WTC11 (cell line): ENCODE measurements at regions of chr9 and their contacts with region 1.

Region 1: DNA sequence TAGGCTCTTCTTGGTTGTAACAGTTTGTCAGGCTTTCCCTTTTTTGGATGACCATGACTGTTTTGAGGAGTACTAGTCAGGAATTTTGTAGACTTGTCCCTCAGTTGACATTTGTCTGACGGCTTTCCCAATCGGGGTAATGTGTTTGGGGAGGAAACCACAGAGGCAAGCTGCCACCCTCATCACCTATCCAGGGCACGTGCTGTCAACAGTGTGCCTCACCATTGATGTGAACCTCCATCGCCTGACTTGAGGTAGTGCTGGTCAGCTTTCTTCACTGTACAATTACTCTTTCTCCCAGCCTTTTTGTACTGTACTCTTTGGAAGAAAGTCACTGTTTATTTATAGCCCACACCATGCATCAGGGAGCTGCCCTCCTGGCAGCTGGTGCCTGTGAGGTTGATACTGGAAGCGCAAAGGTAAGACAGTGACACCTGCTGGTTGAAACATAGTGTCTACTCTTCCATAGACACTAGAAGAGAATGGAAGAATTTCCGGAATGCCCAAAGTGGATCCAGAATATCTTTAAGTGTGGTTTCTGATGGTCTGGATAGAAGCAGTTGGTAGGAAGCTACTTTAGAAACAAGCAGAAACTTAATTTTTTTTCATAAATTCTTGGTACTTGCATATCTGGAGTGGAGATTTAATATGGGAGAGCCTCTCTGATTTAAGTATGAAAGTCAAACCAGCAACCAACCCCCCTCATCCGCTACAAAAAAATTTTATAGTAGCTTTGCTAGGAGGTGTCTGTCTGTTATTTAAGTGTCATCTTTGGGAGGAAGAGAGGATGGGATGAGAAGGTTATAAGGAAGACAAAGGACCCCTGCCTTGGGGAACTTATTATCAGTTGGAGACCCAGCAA is 69.3 kb downstream of the SNX30 start:
- DNase-seq: peak; percentile 31
- ATAC-seq: peak; percentile 98
- H3K4me3 Mint-ChIP-seq: no peak overlapping the region
- H3K27ac Mint-ChIP-seq: peak overlapping the region; percentile 13
- H3K4me1 Mint-ChIP-seq: no peaks in the 10 kb centered on the region
- H3K27me3 Mint-ChIP-seq: no peaks in the 10 kb centered on the region
- CTCF ChIP-seq: peak; percentile 52

Region 2: DNA sequence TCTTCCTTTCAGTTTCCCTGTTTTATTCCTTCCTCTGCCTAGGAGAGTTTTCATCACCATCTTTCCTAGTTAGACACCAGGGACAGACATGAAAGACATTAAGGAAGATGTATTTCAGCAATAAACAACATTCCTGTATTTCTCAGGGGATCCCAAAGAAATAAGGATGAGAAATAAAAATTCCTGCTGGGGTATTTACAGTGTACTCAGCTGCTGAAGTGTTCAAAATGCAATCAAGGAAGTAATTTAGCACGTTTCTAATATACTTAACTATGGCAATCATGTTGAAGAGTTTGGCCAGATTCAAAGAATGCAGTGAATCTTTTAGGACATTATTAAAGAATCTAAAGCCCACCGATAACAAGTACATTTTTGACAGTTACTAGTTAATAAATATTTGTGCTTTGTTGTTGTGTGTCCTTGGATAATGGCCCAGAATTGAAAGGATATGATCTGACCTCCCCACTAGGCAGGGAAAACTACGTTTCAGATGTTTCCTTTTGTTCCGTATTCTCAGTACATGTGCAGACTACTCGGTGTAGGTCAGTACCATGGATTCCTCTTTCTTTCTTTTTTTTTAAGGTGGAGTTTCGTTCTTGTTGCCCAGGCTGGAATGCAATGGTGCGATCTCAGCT is 148.8 kb before region 1 on chr9:
- CTCF ChIA-PET with region 1: no interaction called
- POLR2A ChIA-PET with region 1: no interaction called
- DNase-seq: no peak
- ATAC-seq: no peak
- H3K4me3 Mint-ChIP-seq: no peak overlapping the region
- H3K27ac Mint-ChIP-seq: no peak overlapping the region; the same call in 1 of the 2 replicates
- H3K4me1 Mint-ChIP-seq: peaks cover 9% of the 10 kb centered on the region
- H3K27me3 Mint-ChIP-seq: no peaks in the 10 kb centered on the region
- CTCF ChIP-seq: no peak

Region 3: DNA sequence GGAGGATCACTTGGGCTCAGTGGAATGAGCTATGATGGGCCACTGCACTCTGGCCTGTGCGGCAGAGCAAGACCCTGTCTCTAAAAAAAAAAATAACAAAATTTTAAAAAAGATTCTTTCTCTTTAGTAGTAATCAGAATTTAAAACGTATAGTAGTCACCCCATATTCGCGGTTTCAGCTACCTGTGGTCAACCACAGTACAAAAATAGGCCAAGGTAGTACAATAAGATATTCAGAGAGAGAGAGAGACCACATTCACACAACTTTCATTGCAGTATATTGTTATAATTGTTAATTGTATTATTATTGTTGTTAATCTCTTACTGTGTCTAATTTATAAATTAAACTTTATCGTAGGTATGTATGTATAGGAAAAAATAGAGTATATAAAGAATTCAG is 120.6 kb before region 1 on chr9:
- CTCF ChIA-PET with region 1: no interaction called
- POLR2A ChIA-PET with region 1: no interaction called
- DNase-seq: no peak
- ATAC-seq: no peak
- H3K4me3 Mint-ChIP-seq: no peak overlapping the region
- H3K27ac Mint-ChIP-seq: no peak overlapping the region
- H3K4me1 Mint-ChIP-seq: no peaks in the 10 kb centered on the region
- H3K27me3 Mint-ChIP-seq: no peaks in the 10 kb centered on the region
- CTCF ChIP-seq: no peak

Region 4: DNA sequence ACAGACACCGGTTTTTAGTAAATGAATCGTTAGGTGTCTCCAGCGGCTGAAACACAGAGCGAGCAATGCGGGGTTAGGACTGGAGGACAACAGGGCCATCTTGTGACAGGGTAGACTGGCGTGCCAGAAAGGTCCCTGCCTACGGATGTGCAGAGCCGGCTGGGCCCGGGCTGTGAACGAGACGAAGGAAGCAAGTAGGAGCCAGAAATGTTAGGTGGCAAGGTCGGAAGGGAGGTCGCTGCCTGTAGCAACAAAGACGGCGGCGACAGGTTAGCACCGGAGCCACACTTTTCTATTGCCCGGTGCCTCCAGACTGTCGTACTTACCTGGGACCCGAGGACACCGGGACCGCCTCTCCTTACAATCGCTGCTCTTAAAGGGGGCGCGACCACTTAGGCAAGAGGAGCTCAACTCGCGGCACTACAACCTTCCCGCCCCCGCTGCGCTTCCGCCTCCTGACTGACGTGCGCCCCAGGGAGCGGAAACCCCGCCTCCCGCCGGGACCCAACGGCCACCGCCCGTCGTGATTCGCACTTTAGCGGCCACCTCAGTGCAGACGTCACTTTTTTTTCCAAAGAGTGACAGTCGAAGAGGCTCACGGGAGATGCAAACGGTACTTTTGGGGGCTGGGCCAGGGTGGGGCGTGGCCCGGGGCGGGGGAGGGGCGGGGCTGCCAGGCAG is 102.1 kb before region 1 on chr9 and contains the start of gene INIP:
- CTCF ChIA-PET with region 1: interaction called, 22 read pairs
- POLR2A ChIA-PET with region 1: interaction called, 4 read pairs
- DNase-seq: peak; percentile 97
- ATAC-seq: peak; percentile 91
- H3K4me3 Mint-ChIP-seq: peak within 1 kb of the TSS; percentile 99
- H3K27ac Mint-ChIP-seq: peak within 1 kb of the TSS; percentile 99
- H3K4me1 Mint-ChIP-seq: peaks cover 3% of the 10 kb centered on the region; the same call in 1 of the 2 replicates
- H3K27me3 Mint-ChIP-seq: 0 out of 2 replicates have a peak, but pooled peaks cover 2% of the 10 kb centered on the region
- CTCF ChIP-seq: no peak
- total RNA-seq, gene INIP: 16.0 to 19.1 TPM (median 16.7 TPM) in 3 replicates

Region 5: DNA sequence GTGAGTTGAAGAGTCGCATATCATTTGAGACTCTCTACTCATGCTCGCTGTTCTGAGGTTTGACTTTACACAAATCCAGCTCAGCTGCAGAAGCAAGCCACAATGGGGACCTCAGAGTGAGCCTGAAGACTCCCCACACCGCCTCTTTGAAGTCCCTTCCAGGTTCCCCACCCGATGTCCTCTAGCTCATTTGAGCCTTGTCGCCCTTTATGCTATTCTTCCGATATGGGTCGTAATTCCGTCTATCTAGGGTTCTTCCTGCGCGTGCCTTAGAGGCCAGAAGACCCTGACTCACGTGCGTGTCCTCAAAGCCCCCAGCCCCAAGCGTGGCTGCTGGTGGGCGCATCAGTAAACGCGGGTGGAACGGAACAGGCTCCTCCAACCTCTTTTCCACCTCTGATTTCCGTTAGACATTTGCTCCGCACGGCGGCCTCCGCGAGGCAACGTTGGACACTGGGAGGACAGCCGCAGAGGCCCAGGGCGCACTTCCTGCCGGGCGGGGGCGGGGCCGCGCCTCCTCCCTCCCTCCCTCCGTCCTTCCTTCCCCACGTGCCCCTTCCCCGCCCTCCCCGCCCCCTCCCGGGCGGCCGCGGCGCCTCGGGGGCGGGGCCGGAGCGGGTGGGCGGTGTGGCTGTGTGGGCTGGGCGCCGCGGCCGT is 69.6 kb before region 1 on chr9 and contains the start of gene SNX30:
- CTCF ChIA-PET with region 1: interaction called, 12 read pairs
- POLR2A ChIA-PET with region 1: no interaction called
- DNase-seq: peak; percentile 82
- ATAC-seq: peak; percentile 76
- H3K4me3 Mint-ChIP-seq: peak within 1 kb of the TSS; percentile 90
- H3K27ac Mint-ChIP-seq: peak within 1 kb of the TSS; percentile 91
- H3K4me1 Mint-ChIP-seq: peaks cover 22% of the 10 kb centered on the region
- H3K27me3 Mint-ChIP-seq: peaks cover 10% of the 10 kb centered on the region
- CTCF ChIP-seq: no peak
- total RNA-seq, gene SNX30: 11.8 to 13.4 TPM (median 12.1 TPM) in 3 replicates

Region 6: GRCh38 chr9:112761912-112762655 is 57.8 kb before region 1 on chr9:
- CTCF ChIA-PET with region 1: interaction called, 10 read pairs
- POLR2A ChIA-PET with region 1: no interaction called
- DNase-seq: no peak
- ATAC-seq: no peak
- H3K4me3 Mint-ChIP-seq: no peak overlapping the region
- H3K27ac Mint-ChIP-seq: no peak overlapping the region; the same call in 1 of the 2 replicates
- H3K4me1 Mint-ChIP-seq: peaks cover 15% of the 10 kb centered on the region
- H3K27me3 Mint-ChIP-seq: no peaks in the 10 kb centered on the region
- CTCF ChIP-seq: no peak

Region 7: GRCh38 chr9:112793213-112793810 is 26.6 kb before region 1 on chr9:
- CTCF ChIA-PET with region 1: interaction called, 15 read pairs
- POLR2A ChIA-PET with region 1: no interaction called
- DNase-seq: peak; percentile 87
- ATAC-seq: peak; percentile 98
- H3K4me3 Mint-ChIP-seq: no peak overlapping the region
- H3K27ac Mint-ChIP-seq: no peak overlapping the region
- H3K4me1 Mint-ChIP-seq: no peaks in the 10 kb centered on the region
- H3K27me3 Mint-ChIP-seq: no peaks in the 10 kb centered on the region
- CTCF ChIP-seq: peak; percentile 70

Region 8: DNA sequence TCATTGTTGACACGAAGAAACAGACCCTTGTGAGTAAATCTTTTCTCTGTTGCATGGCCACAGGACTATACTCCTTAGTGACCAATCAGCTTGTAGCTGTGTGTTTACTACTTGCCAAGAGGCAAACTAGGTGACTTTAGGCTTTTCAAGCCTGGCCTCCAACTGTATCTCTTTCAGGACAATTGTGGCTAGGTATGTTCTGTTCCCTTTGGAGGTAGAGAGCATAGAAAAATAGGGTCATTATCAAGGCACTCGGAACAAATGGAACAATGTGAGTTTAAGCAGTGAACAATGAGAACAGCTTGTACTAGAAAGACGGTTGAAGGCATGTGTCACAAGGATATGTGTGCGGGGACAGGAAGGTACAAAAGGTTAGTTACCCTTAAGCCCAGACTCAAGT is 22.7 kb after region 1 on chr9:
- CTCF ChIA-PET with region 1: no interaction called
- POLR2A ChIA-PET with region 1: no interaction called
- DNase-seq: no peak
- ATAC-seq: no peak
- H3K4me3 Mint-ChIP-seq: no peak overlapping the region
- H3K27ac Mint-ChIP-seq: no peak overlapping the region
- H3K4me1 Mint-ChIP-seq: peaks cover 33% of the 10 kb centered on the region
- H3K27me3 Mint-ChIP-seq: no peaks in the 10 kb centered on the region
- CTCF ChIP-seq: no peak